ENCODE measurements at regions of chrX and their contacts with region 1.

Region 1: DNA sequence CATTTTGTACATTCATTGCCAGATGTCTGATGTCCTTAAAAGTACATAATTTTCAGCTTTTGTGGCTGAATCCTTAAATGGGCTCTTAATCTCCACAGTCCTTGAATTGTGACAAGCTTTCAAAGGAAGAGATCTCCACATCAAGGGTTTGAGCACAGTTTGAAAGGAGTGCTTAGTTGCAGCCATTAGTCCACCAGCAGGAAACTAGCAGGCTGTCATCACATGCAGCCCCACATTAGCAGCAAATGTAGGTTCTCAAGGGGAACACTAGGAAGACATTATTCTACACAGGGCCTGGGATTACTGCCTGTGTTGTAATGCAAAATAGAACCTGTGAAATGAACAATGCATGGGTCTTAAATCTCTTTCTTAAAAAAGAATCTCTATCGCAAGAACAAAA is 173.2 kb downstream of the CBLL2 start:
- DNase-seq: no peak
- ATAC-seq: no peak

Region 2: GRCh38 chrX:22495761-22496160 is 49.9 kb after region 1 on chrX:
- intact Hi-C with region 1: no loop called
- DNase-seq: no peak
- ATAC-seq: no peak

Region 3: DNA sequence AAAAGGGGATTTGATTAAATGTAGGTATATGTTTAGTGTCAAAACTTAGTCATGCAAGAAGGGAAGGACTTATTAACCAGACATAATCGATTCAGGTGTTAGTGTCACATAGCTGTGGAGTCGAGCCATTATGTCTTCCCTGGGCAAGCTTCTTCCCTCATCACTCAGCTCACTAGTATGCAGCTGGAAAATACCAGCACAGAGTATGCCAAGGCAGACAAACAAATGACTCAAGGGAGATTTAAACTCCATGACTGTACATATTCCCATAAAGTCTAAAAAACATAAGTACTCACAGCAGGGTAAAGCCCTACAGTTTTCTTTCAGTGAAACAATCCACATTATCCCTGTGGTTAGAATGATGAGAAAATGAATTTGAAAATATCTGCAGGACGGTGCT is 131.3 kb after region 1 on chrX:
- intact Hi-C with region 1: loop called in 1 of 2 experiments (anchors 10 kb)
- DNase-seq: no peak
- ATAC-seq: no peak

Region 4: DNA sequence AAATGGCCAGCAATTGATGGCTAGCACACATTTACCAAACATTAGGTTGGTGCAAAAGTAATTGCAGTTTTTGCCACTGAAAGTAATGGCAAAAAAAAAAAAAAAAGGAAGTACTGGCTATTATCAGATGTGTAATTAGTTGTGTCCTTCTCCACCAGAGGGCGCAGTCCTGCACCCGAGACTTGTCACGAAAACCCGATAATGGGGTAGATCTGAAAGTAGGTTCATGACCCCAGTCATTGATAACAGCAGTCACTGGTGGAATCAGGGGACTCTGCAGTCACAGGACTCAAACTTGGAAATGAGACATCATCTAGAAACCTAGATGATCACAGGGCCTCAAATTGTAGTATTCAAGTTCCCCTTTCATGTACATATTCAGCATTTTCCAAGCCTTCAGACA is 1310.3 kb after region 1 on chrX:
- intact Hi-C with region 1: no loop called
- DNase-seq: peak; percentile 64
- ATAC-seq: no peak